HepG2 (cell line): ENCODE measurements at regions of chr6 and their contacts with region 1.

Region 1: GRCh38 chr6:98845211-98846020 is 11.0 kb downstream of the POU3F2 start:
- DNase-seq: peak; percentile 40
- ATAC-seq: peak; percentile 85
- H3K4me3 ChIP-seq: peak overlapping the region in 1 of 3 experiments; percentile 16; a peak in 1 of 6 replicates
- H3K27ac ChIP-seq: no peak overlapping the region
- H3K4me1 ChIP-seq: no peaks in the 10 kb centered on the region
- H3K27me3 ChIP-seq: peaks cover 3 to 47% of the 10 kb centered on the region in 2 experiments
- CTCF ChIP-seq: peak; percentile 92
- EP300 ChIP-seq: no peak
- POLR2A ChIP-seq: no peak
- RAD21 ChIP-seq: peak; percentile 75

Region 2: GRCh38 chr6:97059473-97059872 is 1785.9 kb before region 1 on chr6:
- CTCF ChIA-PET with region 1: no interaction called
- POLR2A ChIA-PET with region 1: no interaction called
- in situ Hi-C with region 1: loop called (anchors 25 kb)
- intact Hi-C with region 1: no loop called
- DNase-seq: peak; percentile 17
- ATAC-seq: peak; percentile 62; the same call in 2 of the 3 replicates
- H3K4me3 ChIP-seq: no peak overlapping the region
- H3K27ac ChIP-seq: no peak overlapping the region
- H3K4me1 ChIP-seq: no peaks in the 10 kb centered on the region
- H3K27me3 ChIP-seq: peaks cover 0 to 2% of the 10 kb centered on the region in 2 experiments; a peak in 1 of 5 replicates
- CTCF ChIP-seq: peak; percentile 54
- EP300 ChIP-seq: no peak
- POLR2A ChIP-seq: no peak
- RAD21 ChIP-seq: no peak

Region 3: GRCh38 chr6:97437087-97437486 is 1408.3 kb before region 1 on chr6:
- CTCF ChIA-PET with region 1: no interaction called
- POLR2A ChIA-PET with region 1: no interaction called
- in situ Hi-C with region 1: no loop called
- intact Hi-C with region 1: loop called (anchors 5 kb)
- DNase-seq: peak; percentile 31
- ATAC-seq: peak; percentile 77
- H3K4me3 ChIP-seq: no peak overlapping the region
- H3K27ac ChIP-seq: no peak overlapping the region
- H3K4me1 ChIP-seq: no peaks in the 10 kb centered on the region
- H3K27me3 ChIP-seq: no peaks in the 10 kb centered on the region
- CTCF ChIP-seq: peak; percentile 49
- EP300 ChIP-seq: no peak
- POLR2A ChIP-seq: no peak
- RAD21 ChIP-seq: no peak

Region 4: DNA sequence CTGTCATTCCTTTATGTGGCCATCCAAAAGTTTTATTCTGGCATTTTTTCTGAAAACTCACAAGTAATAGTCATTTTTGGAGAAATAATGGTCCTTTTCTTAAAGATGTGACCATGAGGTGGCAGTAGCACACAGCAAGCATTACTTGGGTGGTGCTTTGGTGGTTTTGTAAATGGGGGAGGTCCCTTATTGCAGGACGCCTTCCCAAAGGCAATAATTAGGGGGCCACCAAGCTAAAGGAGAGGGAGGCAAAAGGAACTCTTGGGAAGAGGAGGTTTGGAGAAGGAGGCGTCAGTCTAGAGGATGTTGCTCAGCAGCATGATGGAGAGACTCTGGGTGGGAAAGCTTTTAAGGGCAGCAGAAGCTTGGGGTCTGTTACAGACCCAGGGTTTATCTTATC is 1139.8 kb before region 1 on chr6:
- CTCF ChIA-PET with region 1: no interaction called
- POLR2A ChIA-PET with region 1: no interaction called
- in situ Hi-C with region 1: loop called (anchors 25 kb)
- intact Hi-C with region 1: no loop called
- DNase-seq: peak; percentile 5
- ATAC-seq: no peak
- H3K4me3 ChIP-seq: no peak overlapping the region
- H3K27ac ChIP-seq: no peak overlapping the region
- H3K4me1 ChIP-seq: no peaks in the 10 kb centered on the region
- H3K27me3 ChIP-seq: no peaks in the 10 kb centered on the region
- CTCF ChIP-seq: peak; percentile 33
- EP300 ChIP-seq: no peak
- POLR2A ChIP-seq: no peak
- RAD21 ChIP-seq: no peak

Region 5: GRCh38 chr6:98054453-98054852 is 791.0 kb before region 1 on chr6:
- CTCF ChIA-PET with region 1: no interaction called
- POLR2A ChIA-PET with region 1: no interaction called
- in situ Hi-C with region 1: loop called (anchors 25 kb)
- intact Hi-C with region 1: loop called (anchors 1 kb)
- DNase-seq: no peak
- ATAC-seq: no peak
- H3K4me3 ChIP-seq: no peak overlapping the region
- H3K27ac ChIP-seq: no peak overlapping the region
- H3K4me1 ChIP-seq: no peaks in the 10 kb centered on the region
- H3K27me3 ChIP-seq: no peaks in the 10 kb centered on the region
- CTCF ChIP-seq: 0 out of 2 replicates have a peak, but pooled peaks have one; percentile 3
- EP300 ChIP-seq: no peak
- POLR2A ChIP-seq: no peak
- RAD21 ChIP-seq: no peak

Region 6: GRCh38 chr6:99119109-99120031 is 274.0 kb after region 1 on chr6:
- CTCF ChIA-PET with region 1: no interaction called
- POLR2A ChIA-PET with region 1: no interaction called
- in situ Hi-C with region 1: loop called (anchors 25 kb)
- intact Hi-C with region 1: loop called (anchors 5 kb)
- DNase-seq: peak; percentile 23
- ATAC-seq: peak; percentile 74
- H3K4me3 ChIP-seq: no peak overlapping the region
- H3K27ac ChIP-seq: no peak overlapping the region
- H3K4me1 ChIP-seq: no peaks in the 10 kb centered on the region
- H3K27me3 ChIP-seq: 0 out of 5 replicates have a peak, but pooled peaks cover 0 to 2% of the 10 kb centered on the region in 2 experiments
- CTCF ChIP-seq: peak; percentile 73
- EP300 ChIP-seq: no peak
- POLR2A ChIP-seq: no peak
- RAD21 ChIP-seq: no peak